ENCODE measurements at regions of chr14 and their contacts with region 1.

Region 1: DNA sequence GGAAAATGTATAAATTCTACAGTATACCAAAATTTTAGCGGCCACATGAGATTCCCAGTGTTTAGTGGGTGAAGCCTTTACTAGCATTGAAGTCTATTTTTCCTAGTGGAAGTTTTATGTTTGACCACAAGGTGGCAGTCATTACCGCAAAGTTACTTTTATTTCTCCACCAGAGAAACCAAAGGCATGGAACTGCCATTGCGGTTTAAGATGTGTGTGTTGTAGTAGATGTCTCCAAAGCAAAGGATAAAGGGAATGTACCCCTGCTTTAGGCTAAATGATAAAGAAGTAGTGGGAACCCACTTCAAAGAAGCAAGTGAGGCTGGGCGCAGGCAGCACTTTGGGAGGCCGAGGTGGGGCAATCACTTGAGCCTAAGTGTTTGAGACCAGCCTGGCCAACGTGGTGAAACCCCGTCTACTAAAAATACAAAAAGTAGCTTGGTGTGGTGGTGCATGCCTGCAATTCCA is 140.5 kb downstream of the PRKCH start:
- DNase-seq: peak in 3 of 7 donors; percentile 51 to 61 (median 58)
- H3K4me3 ChIP-seq: no peak overlapping the region
- H3K27ac ChIP-seq: peak overlapping the region in 2 of 5 donors; percentile 11 to 42
- H3K4me1 ChIP-seq: peaks cover 7 to 32% of the 10 kb centered on the region in 2 donors
- H3K27me3 ChIP-seq: no peaks in the 10 kb centered on the region
- CTCF ChIP-seq: peak; percentile 81 to 91 (median 86)
- POLR2A ChIP-seq: no peak

Region 2: DNA sequence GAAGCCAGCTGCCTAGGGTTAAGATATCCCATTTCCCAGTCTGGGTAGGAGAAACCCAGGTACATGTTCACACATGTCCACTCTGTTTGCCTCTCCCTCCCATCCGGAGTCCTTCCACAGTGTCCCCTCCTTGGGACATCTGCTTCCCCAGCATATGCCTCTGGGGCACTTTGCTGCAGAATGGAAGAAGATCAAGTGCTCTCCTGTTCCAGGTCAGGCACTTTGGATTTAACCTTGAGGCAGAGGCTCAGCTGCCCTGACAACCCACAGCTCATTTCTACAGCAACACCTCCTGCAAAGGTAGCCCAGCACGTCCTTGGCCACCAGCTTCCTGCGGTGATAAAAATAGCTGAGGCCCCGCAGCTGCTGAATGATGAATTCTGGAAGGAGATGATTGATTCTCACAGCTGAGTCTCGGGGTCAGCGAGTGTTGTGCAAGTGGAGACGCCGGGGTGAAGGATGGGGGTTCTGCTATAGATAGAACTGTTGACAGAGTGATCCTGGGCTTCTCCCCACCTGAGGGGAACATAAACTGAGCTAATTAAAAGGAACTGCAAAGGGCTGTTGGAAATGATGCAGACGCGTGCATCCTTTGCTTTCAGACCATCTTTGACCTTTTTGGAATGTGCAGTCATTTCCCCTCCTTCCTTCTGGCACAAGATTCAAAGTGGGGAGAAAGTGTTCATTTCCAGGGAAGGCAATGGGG is 335.8 kb before region 1 on chr14:
- intact Hi-C with region 1: no loop called
- DNase-seq: peak in 4 of 7 donors; percentile 25 to 66 (median 46)
- H3K4me3 ChIP-seq: no peak overlapping the region
- H3K27ac ChIP-seq: peak overlapping the region in 1 of 5 donors; percentile 1
- H3K4me1 ChIP-seq: peaks cover 0 to 11% of the 10 kb centered on the region in 2 donors
- H3K27me3 ChIP-seq: no peaks in the 10 kb centered on the region
- CTCF ChIP-seq: no peak
- POLR2A ChIP-seq: no peak

Region 3: GRCh38 chr14:61368114-61368726 is 93.6 kb before region 1 on chr14:
- intact Hi-C with region 1: no loop called
- DNase-seq: no peak
- H3K4me3 ChIP-seq: no peak overlapping the region
- H3K27ac ChIP-seq: no peak overlapping the region
- H3K4me1 ChIP-seq: no peaks in the 10 kb centered on the region
- H3K27me3 ChIP-seq: no peaks in the 10 kb centered on the region
- CTCF ChIP-seq: no peak
- POLR2A ChIP-seq: no peak

Region 4: GRCh38 chr14:61730756-61731373 is 269.0 kb after region 1 on chr14:
- intact Hi-C with region 1: loop called in 1 of 2 experiments (anchors 5 kb)
- DNase-seq: no peak
- H3K4me3 ChIP-seq: no peak overlapping the region
- H3K27ac ChIP-seq: no peak overlapping the region
- H3K4me1 ChIP-seq: peaks cover 0 to 14% of the 10 kb centered on the region in 2 donors
- H3K27me3 ChIP-seq: no peaks in the 10 kb centered on the region
- CTCF ChIP-seq: peak; percentile 17 to 75 (median 54)
- POLR2A ChIP-seq: no peak

Region 5: GRCh38 chr14:62662811-62663452 is 1201.1 kb after region 1 on chr14:
- intact Hi-C with region 1: no loop called
- DNase-seq: peak in 1 of 7 donors; percentile 6
- H3K4me3 ChIP-seq: peak overlapping the region in 1 of 4 donors; percentile 29
- H3K27ac ChIP-seq: no peak overlapping the region
- H3K4me1 ChIP-seq: no peaks in the 10 kb centered on the region
- H3K27me3 ChIP-seq: no peaks in the 10 kb centered on the region
- CTCF ChIP-seq: no peak
- POLR2A ChIP-seq: no peak

Measured in adrenal gland (tissue), 19 donors.